Testis (tissue), 5 donors: ENCODE measurements at regions of chr2 and their contacts with region 1.

Region 1: GRCh38 chr2:119407430-119408220 is 24.0 kb upstream of the TMEM37 start:
- DNase-seq: peak; percentile 72
- H3K4me3 ChIP-seq: no peak overlapping the region
- H3K27ac ChIP-seq: no peak overlapping the region
- H3K4me1 ChIP-seq: no peaks in the 10 kb centered on the region
- H3K27me3 ChIP-seq: no peaks in the 10 kb centered on the region
- CTCF ChIP-seq: peak; percentile 83 to 94 (median 87)
- POLR2A ChIP-seq: no peak

Region 2: DNA sequence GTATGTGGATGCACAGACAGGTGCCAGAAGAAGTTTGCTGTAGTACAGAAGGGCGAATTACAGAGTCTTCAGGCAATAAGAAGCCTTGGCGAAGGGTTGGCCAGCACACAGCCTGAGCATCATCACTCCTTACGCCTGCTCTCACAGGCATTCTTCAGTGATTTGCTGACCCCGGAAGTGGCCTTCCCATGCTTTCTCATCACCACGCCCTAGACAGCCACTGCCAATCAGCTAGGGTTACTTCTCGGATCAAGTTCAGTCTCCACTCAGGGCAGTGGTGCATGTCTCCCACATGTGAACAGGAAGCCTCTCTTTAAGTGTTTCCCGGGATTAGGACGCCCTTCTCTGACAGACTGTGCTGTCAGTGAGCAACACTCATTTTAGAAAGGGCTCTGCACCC is 330.9 kb before region 1 on chr2:
- intact Hi-C with region 1: no loop called
- DNase-seq: no peak
- H3K4me3 ChIP-seq: no peak overlapping the region
- H3K27ac ChIP-seq: no peak overlapping the region
- H3K4me1 ChIP-seq: no peaks in the 10 kb centered on the region
- H3K27me3 ChIP-seq: no peaks in the 10 kb centered on the region
- CTCF ChIP-seq: no peak
- POLR2A ChIP-seq: no peak

Region 3: DNA sequence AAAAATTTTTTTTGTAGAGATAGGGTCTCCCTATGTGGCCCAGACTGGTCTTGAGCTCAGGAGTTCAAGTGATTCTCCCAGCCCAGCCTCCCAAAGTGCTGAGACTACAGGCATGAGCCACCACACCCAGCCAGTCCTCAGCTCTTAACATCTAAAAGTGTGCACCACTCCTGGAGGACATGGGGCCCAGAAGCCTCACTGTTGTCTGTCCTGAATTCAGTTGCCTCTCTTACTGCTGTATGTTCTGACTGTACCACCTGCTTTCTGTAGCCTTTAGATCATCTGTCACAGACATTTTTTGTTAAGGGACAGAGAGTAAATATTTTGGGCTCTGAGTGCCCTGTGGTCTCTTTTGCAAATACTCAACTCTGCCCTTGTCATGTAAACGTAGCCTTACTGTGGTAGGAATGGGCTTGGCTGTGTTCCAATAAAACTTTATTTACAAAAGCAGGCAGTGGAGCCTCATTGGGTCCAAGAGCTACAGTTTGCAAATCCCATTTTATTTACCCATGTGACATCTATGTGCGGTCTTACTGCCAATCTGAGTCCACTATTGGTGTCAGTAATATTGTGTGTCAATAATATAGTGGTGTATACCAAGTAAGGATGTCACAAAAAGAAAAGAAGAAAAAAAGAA is 62.2 kb after region 1 on chr2:
- intact Hi-C with region 1: loop called (anchors 5 kb)
- DNase-seq: no peak
- H3K4me3 ChIP-seq: no peak overlapping the region
- H3K27ac ChIP-seq: no peak overlapping the region
- H3K4me1 ChIP-seq: peaks cover 5% of the 10 kb centered on the region
- H3K27me3 ChIP-seq: no peaks in the 10 kb centered on the region
- CTCF ChIP-seq: no peak
- POLR2A ChIP-seq: no peak

Region 4: DNA sequence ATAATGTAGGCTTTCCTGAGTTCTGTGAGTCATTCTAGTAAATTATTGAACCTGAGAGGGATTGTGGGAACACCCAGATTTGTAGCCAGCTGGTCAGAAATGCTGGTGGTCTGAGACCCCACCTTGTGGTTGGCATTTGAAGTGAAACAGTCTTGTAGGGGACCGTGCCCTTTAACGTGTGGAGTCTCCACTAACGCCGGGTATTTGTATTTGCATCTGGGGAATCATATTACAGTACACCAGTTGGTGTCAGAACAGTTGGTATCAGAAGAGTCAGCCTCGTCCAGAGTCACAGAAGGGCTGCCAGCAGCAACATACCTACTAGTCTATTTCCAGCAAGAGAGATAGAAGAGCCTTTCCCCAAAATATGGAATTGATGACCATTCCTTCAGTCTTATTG is 313.8 kb after region 1 on chr2:
- intact Hi-C with region 1: no loop called
- DNase-seq: no peak
- H3K4me3 ChIP-seq: no peak overlapping the region
- H3K27ac ChIP-seq: no peak overlapping the region
- H3K4me1 ChIP-seq: no peaks in the 10 kb centered on the region
- H3K27me3 ChIP-seq: no peaks in the 10 kb centered on the region
- CTCF ChIP-seq: no peak
- POLR2A ChIP-seq: no peak